Activated CD4-positive, alpha-beta T cell treated with anti-CD3 and anti-CD28 coated beads for 36 hours (primary cell): ENCODE measurements at regions of chr9 and their contacts with region 1.

Region 1: GRCh38 chr9:4679268-4680172 is at the start of gene CDC37L1:
- DNase-seq: peak; percentile 99
- ATAC-seq: peak; percentile 95
- H3K4me3 Mint-ChIP-seq: no peak within 1 kb of the TSS
- H3K27ac Mint-ChIP-seq: no peak within 1 kb of the TSS
- H3K4me1 Mint-ChIP-seq: peaks cover 11% of the 10 kb centered on the region
- H3K27me3 Mint-ChIP-seq: no peaks in the 10 kb centered on the region
- total RNA-seq, gene CDC37L1: 8.0 to 9.8 TPM

Region 2: DNA sequence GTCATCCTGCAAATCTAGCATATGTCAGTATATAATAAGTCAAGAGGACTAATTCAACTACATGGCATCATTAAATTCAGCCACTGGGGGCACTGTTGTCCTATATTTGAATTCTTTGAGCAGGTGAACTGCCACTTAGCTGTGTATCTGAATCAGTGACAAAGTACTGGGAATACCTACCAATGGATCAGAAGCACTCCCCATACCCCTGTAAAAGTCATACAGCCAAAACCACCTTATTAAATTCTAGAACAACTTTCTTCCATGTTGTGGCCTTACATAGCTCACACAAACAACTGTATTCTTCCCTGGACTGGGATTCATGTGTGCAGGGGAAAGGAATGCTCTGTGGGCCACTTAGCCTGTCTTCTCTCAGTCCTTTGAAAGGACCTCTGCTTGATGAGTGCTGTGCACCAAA is 74.8 kb before region 1 on chr9:
- CTCF ChIA-PET with region 1: interaction called, 3 read pairs
- POLR2A ChIA-PET with region 1: no interaction called
- intact Hi-C with region 1: loop called in 1 of 2 experiments (anchors 2 kb)
- DNase-seq: peak; percentile 82
- ATAC-seq: peak; percentile 84
- H3K4me3 Mint-ChIP-seq: no peak overlapping the region
- H3K27ac Mint-ChIP-seq: no peak overlapping the region
- H3K4me1 Mint-ChIP-seq: peaks cover 34% of the 10 kb centered on the region
- H3K27me3 Mint-ChIP-seq: no peaks in the 10 kb centered on the region

Region 3: DNA sequence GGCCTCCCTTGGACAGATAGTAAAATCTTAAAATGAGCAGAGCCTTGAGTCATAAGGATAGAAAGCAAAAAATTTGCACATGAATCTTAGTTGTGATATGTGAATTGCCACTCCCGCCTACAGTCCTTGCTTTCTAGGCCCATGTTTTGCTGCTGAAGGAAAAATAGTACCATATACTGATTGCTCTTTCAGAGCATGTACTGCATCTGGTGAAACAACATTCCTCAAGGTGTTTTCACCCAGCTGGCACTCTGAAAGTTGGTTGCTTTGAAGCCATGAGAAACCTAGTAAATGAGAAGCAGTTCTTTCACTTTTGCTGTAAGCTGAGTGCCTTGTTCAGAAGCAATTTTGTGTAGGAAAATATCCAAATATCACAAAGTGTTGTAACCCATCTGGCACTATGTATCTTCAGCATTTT is 10.2 kb after region 1 on chr9:
- CTCF ChIA-PET with region 1: no interaction called
- POLR2A ChIA-PET with region 1: no interaction called
- intact Hi-C with region 1: loop called (anchors 1 kb)
- DNase-seq: peak; percentile 43
- ATAC-seq: peak; percentile 83
- H3K4me3 Mint-ChIP-seq: no peak overlapping the region
- H3K27ac Mint-ChIP-seq: peak overlapping the region; percentile 67
- H3K4me1 Mint-ChIP-seq: peaks cover 50% of the 10 kb centered on the region
- H3K27me3 Mint-ChIP-seq: no peaks in the 10 kb centered on the region

Region 4: DNA sequence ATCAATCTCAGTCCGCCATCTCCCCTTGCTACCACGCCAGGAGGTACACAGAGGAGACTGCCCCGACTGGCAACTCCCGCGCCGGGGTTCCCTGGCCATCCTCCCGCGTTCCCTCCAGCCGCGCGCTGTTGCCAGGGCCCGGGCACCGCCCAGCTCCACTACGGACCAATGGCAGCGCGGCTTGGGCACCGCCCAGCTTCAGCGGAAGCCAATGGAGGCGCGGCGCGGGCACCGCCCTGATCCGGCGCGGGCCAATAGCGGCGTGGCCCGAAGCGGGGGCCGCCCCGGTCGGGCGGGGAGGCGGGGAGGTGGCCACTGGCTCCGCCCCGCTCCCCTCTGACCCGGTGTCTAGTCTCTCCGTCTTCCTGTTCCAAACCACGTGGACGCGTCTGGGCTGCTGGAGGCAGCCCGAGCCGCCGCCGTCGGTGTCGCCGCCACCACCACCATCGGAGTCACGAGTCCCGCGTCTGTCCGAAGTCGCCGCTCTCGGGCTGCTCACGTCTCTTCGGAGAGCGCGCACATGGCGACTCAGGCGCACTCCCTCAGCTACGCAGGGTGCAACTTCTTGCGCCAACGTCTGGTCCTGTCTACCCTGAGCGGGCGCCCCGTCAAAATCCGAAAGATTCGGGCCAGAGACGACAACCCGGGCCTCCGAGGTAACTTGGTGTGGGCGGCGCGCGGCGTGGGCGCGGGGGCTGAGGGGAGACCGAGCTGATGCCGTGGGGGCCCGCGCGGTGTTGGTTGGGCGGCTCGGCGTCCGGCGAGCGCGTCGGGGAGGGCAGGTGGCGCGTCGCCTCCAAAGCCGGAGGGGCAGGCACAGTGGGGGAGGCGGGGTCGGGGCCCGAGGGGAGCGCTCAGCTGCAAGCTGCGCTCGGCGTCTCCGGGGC is 113.3 kb after region 1 on chr9 and contains the start of gene RCL1:
- CTCF ChIA-PET with region 1: no interaction called
- POLR2A ChIA-PET with region 1: interaction called, 3 read pairs
- intact Hi-C with region 1: loop called (anchors 1 kb)
- DNase-seq: peak; percentile 98
- ATAC-seq: peak; percentile 96
- H3K4me3 Mint-ChIP-seq: peak within 1 kb of the TSS; percentile 97
- H3K27ac Mint-ChIP-seq: peak within 1 kb of the TSS; percentile 89
- H3K4me1 Mint-ChIP-seq: peaks cover 44% of the 10 kb centered on the region
- H3K27me3 Mint-ChIP-seq: no peaks in the 10 kb centered on the region
- total RNA-seq, gene RCL1: 27.0 to 36.4 TPM

Region 5: DNA sequence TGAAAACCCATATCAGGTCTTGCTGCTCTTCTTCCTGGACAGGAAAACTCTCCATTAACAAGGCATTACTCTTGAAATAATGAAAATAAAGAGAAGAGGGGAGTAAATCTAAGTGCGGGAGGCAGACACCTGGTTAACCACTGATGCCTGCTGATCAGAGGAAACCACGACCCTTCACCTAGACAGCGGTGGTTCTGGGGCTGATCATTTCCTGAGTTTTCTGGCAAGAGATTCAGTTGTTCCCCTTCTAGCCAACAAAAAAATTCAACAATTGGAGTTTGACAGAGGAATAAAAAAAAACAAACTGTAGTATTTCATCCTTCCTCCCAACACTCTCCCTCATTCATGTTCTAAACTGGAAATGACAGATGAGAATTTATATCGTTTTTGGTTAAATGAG is 622.0 kb after region 1 on chr9:
- CTCF ChIA-PET with region 1: no interaction called
- POLR2A ChIA-PET with region 1: no interaction called
- intact Hi-C with region 1: no loop called
- DNase-seq: no peak
- ATAC-seq: no peak
- H3K4me3 Mint-ChIP-seq: peak overlapping the region; percentile 51
- H3K27ac Mint-ChIP-seq: peak overlapping the region; percentile 51
- H3K4me1 Mint-ChIP-seq: peaks cover 22% of the 10 kb centered on the region
- H3K27me3 Mint-ChIP-seq: no peaks in the 10 kb centered on the region

Region 6: DNA sequence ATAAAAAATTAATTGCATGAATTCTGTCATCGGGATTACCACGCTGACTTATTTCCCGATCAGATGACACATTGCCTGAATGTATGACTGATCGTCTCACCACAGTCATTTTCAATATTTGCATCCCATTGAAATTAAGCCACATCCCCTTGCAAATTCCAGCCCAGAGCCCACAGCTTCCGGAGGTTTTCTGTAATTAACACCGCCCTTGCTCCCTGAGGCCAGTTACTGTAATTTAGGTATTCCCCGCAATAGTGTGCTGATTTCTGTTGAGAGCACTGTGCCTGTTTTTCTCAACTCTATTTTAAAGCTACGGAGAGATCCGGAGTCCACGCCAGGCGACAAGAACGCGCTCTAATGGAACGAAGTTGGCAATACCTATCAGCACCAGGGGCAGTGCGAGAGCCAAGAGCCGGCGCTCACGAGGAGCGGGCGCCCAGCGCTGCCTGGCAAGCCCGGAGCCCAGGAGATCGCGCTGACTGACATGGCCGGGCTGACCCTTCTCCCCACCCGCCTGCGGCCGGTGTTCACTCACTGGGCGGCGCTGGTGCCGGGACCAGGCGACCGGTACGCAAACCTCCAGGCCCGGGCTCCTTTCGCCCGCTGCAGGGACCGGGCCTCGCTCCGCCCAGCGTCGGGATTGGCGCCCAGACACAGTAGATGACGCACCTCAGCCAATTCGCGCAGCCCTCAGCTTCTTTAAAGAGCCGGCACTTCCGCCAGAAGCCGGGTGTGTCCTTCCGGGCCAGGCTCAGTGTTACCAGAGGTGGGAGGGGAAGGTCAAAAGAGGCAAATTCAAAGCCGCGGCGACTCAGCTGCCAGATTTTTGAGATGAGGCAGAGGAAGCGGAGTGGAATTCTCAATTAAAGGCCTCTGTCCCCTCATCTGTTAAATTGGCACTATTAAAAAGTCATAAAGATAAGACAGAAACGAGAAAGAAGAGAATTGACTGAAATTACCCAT is 758.0 kb after region 1 on chr9 and contains the start of gene PLGRKT:
- CTCF ChIA-PET with region 1: no interaction called
- POLR2A ChIA-PET with region 1: no interaction called
- intact Hi-C with region 1: loop called in 1 of 2 experiments (anchors 5 kb)
- DNase-seq: peak; percentile 95
- ATAC-seq: peak; percentile 90
- H3K4me3 Mint-ChIP-seq: peak within 1 kb of the TSS; percentile 85
- H3K27ac Mint-ChIP-seq: peak within 1 kb of the TSS; percentile 99
- H3K4me1 Mint-ChIP-seq: peaks cover 55% of the 10 kb centered on the region
- H3K27me3 Mint-ChIP-seq: no peaks in the 10 kb centered on the region
- total RNA-seq, gene PLGRKT: 44.0 to 47.9 TPM

Region 7: DNA sequence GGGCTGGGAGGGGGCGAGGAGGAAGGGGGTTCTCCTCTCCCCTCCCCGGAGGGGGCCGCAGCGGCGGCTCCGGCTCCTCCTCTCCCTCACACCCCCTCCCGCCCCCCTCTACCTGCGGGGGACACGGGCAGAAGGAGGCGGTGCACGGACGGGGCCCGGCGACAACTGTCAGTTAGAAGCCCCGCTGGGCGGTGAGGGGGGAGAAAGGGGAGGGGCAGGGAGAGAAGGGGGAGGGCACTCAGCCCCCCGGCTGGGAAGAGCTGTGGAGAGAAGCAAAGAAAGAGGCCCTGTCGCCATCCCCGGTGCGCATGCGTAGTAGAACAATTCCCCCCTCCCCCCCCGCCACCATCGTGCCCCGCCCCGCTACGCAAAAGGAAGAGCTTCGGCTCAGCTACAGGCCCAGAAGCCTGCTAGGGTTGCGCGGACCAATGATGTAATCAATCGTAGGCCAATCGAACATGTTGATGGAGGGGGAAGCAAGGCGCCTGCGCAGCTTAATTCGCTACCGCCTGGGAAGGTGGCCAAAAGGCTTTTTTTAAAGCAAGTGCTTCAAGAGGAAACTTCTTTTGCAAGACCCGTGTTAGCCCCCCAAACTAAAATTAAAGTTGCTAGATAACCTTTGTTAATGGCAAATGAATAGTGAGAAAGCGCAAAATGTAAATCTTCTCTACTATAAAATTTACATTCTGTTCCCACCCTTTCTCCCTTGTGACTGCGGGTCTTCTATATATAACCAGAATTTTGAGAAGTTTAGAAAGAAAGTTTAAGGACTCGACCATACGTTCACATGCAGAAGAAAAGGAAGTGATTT is 1328.9 kb after region 1 on chr9:
- CTCF ChIA-PET with region 1: no interaction called
- POLR2A ChIA-PET with region 1: no interaction called
- intact Hi-C with region 1: loop called in 1 of 2 experiments (anchors 2 kb)
- DNase-seq: peak; percentile 96
- ATAC-seq: peak; percentile 77
- H3K4me3 Mint-ChIP-seq: peak overlapping the region; percentile 88
- H3K27ac Mint-ChIP-seq: peak overlapping the region; percentile 84
- H3K4me1 Mint-ChIP-seq: peaks cover 61% of the 10 kb centered on the region
- H3K27me3 Mint-ChIP-seq: no peaks in the 10 kb centered on the region